Tibial artery (tissue), 4 donors: ENCODE measurements at regions of chr6 and their contacts with region 1.

Region 1: GRCh38 chr6:132893788-132894428 is 79.5 kb downstream of the RPS12 start:
- DNase-seq: no peak
- H3K4me3 ChIP-seq: no peak overlapping the region
- H3K27ac ChIP-seq: no peak overlapping the region
- H3K4me1 ChIP-seq: no peaks in the 10 kb centered on the region
- H3K27me3 ChIP-seq: no peaks in the 10 kb centered on the region
- CTCF ChIP-seq: no peak

Region 2: GRCh38 chr6:132607544-132608233 is 286.2 kb before region 1 on chr6:
- intact Hi-C with region 1: loop called (anchors 5 kb)
- DNase-seq: no peak
- H3K4me3 ChIP-seq: no peak overlapping the region
- H3K27ac ChIP-seq: no peak overlapping the region
- H3K4me1 ChIP-seq: no peaks in the 10 kb centered on the region
- H3K27me3 ChIP-seq: peaks cover 0 to 3% of the 10 kb centered on the region in 2 donors
- CTCF ChIP-seq: no peak

Region 3: DNA sequence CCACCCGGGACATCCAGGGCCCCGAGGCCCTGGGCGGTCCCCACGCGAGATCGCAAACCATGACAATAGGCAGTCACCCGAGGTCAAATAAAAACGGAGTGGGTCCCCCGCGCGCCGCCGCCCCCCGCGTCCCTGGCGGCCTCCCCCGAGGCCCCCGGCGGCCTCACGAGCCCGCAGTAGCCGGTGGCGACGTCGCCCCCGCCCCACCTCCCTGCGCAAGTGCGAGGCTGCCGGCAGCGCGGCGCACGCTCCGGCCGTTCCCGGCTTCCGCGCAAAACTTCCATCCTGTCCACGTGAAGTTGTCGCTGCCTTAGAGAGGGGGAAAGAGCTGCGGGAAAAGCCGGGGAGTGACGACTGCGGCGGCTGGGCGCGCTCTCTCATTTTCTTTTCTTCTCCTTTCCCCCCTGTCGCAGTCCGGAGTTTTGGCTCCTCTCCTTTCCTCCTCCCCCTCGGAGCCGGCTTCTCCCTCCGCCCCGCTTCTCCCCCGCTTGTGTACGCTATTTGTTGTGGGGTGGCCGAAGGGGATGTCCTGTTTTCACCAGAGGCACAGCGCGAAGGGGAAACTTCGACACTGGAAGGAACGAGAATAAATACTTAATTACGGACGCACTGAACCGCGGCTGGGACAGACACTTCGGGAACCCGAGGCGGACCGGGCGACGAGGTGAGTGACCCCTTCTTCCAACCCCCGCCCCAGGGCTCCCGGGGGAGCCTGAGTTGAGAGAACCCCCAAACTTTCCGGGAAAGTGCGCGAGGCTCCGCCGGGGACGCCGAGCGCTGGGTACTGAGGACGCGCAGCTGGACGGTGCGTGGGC is 347.4 kb after region 1 on chr6 and contains the start of gene EYA4:
- intact Hi-C with region 1: no loop called
- DNase-seq: no peak
- H3K4me3 ChIP-seq: peak within 1 kb of the TSS; percentile 48 to 65
- H3K27ac ChIP-seq: peak within 1 kb of the TSS; percentile 1 to 36
- H3K4me1 ChIP-seq: peaks cover 0 to 34% (median 21%) of the 10 kb centered on the region in 4 donors
- H3K27me3 ChIP-seq: peaks cover 0 to 30% of the 10 kb centered on the region in 2 donors
- CTCF ChIP-seq: no peak

Region 4: DNA sequence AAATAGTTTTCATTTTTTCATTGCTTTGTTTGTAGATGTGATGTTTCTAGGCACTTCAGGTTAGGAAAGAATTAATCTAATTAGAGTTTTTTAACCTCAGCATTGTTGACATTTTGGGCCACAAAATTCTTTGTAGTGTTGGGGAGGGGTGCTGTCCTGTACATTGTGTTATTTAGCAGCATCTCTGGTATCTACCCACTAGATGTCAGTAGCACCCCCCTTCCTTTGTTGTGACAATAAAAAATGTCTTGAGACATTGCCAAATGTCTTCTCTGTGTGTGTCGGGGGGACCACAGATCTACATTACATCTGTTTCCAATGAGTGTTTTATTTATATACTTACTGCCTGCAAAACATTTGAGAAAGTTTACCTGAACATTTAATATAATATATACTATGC is 392.9 kb after region 1 on chr6:
- intact Hi-C with region 1: no loop called
- DNase-seq: no peak
- H3K4me3 ChIP-seq: no peak overlapping the region
- H3K27ac ChIP-seq: no peak overlapping the region
- H3K4me1 ChIP-seq: peaks cover 0 to 7% (median 0%) of the 10 kb centered on the region in 4 donors
- H3K27me3 ChIP-seq: no peaks in the 10 kb centered on the region
- CTCF ChIP-seq: no peak

Region 5: DNA sequence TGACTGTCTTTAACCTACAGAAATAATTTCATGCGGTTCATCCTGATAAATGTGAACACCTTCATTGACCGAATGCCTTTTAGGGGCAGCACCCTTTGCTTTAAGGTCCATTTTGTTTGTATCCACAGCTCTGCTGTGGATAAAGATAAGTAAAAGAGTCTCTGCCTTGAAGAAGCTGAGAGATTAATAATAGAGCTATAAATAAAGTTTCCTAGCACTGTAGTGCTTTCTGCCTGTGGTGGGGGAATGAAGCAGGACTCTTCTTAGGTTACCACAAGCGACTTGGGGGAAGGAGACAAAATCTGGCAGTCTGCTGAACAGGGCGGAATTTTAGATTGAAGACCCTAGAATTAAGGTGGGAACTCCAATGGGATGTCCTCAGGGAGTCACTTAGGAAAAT is 404.9 kb after region 1 on chr6:
- intact Hi-C with region 1: no loop called
- DNase-seq: no peak
- H3K4me3 ChIP-seq: no peak overlapping the region
- H3K27ac ChIP-seq: no peak overlapping the region
- H3K4me1 ChIP-seq: no peaks in the 10 kb centered on the region
- H3K27me3 ChIP-seq: no peaks in the 10 kb centered on the region
- CTCF ChIP-seq: no peak